ENCODE measurements at regions of chr1 and their contacts with region 1.

Region 1: DNA sequence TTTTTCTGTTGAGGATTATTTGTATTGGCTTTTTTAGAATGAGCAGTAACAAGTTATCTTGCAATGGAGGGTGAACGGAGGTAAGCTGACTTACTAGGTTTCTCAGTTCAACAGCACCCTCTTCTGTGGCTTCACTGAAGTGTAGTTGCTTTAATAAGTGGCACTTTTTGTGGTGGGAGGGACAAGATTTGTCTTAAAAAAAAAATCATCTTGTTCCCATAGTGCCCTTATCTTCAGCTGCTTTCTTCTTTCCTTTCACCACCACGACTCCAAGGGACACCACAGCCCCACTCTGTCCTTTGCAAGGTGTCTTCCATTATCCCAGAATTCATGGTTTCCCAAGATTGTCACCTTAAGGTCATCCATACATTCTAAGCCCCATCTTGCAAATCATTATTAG is 92.9 kb downstream of the PIGK start:
- DNase-seq: no peak
- ATAC-seq: peak in 3 of 4 donors; percentile 61 to 66 (median 65)
- H3K4me3 ChIP-seq: no peak overlapping the region
- H3K27ac ChIP-seq: no peak overlapping the region
- H3K4me1 ChIP-seq: no peaks in the 10 kb centered on the region
- H3K27me3 ChIP-seq: no peaks in the 10 kb centered on the region
- CTCF ChIP-seq: peak in 11 of 12 donors; percentile 19 to 57 (median 40)
- POLR2A ChIP-seq: no peak

Region 2: DNA sequence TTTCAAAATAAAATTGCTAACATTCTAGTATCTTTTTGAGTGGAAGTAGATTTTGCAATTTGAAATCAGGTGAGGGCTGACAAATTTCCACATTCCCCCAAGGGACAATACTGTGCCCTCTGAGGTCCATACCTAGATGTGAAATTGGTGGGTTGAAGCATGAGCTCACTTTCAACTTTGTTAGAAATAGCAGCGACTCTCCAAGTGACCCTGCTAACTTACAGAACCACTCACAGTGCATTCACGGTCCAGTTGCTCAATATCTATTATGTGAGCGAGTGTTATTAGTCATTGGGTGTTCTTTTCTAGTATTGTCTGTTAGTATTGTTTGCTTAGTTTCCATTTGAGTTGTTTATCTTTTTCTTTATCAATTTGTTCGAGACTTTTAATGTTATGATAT is 1140.5 kb before region 1 on chr1:
- intact Hi-C with region 1: loop called in 4 of 10 experiments (anchors 5 to 10 kb)
- DNase-seq: no peak
- ATAC-seq: no peak
- H3K4me3 ChIP-seq: no peak overlapping the region
- H3K27ac ChIP-seq: no peak overlapping the region
- H3K4me1 ChIP-seq: no peaks in the 10 kb centered on the region
- H3K27me3 ChIP-seq: peaks cover 0 to 17% (median 0%) of the 10 kb centered on the region in 9 donors
- CTCF ChIP-seq: no peak
- POLR2A ChIP-seq: no peak